HEK293T (cell line): ENCODE measurements at regions of chr3 and their contacts with region 1.

Region 1: DNA sequence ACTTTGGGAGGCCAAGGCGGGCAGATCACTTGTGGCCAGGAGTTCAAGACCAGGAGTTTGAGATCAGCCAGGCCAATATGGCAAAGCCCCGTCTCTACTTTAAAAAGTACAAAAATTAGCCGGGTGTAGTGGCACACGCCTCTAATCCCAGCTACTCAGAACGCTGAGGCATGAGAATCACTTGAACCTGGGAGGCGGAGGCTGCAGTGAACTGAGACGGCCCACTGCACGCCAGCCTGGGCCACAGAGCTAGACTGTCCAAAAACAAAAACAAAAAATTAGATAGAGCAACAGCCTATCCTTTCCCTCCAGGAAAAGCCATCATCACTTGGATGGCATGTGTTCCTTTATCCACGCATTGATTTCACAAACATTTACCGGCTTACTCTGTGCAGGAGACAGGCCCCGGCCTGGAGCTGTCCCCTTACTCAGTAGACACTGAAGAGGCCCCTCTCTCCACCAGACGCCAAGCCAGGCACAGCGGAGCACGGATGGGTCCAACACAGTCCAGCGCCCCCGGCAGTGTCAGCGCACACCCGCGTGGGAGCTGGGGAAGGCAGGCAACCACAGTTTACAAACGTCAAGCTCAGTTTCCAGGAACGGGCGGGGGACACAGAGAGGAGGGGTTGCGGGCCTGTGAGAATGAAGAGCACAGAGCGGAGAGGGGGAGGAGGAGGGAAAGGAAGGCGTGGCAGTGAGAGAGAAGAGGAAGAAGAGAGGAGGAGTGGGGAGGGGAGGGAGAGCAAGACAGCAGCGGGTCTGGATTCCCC is 3.1 kb downstream of the GP5 start:
- DNase-seq: no peak

Region 2: GRCh38 chr3:194344012-194344411 is 52.0 kb before region 1 on chr3:
- CTCF ChIA-PET with region 1: interaction called, 11 read pairs
- POLR2A ChIA-PET with region 1: no interaction called
- DNase-seq: peak; percentile 70

Region 3: DNA sequence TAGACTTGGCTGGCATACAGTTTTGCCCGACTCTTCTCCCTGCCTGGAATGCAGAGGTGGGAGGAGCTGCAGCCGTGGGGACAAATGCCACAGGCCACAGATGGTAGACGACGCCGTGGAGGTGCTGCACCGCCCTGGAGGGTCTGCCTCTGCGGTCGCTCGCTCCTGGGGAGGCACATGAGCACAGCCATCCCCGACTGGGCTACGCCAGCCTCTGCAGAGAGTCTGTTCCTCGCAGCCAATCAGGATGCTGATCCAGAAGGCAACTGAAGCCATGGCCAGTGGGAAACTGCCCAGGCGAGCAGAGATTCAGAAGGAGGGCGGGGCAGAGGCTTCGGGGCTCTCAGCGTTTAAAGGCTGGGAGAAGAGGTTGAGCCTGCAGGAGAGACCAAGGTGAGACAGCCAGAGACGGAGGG is 14.5 kb before region 1 on chr3:
- CTCF ChIA-PET with region 1: no interaction called
- POLR2A ChIA-PET with region 1: no interaction called
- DNase-seq: no peak